Mammary epithelial cell (primary cell): ENCODE measurements at regions of chr6 and their contacts with region 1.

Region 1: DNA sequence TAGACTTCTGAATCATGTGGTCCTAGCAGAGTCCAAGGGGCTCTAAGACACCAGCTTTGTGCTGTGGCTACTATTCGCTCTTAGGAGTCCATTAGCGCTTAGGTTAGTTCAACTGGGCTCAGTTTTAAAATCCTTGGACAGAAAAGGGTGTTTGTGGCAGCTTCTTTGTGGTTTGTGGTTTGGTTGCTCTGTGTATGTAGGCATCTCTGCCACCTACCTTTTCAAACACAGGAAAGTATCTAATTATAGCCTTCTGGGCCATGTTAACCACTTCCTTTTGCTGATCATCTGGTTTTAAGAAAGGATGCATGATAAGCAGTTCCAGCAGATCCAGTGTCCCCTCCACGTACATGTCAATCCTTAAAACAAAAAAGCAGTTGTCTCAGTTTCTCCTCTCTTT is 10.8 kb downstream of the GSTA4 start:
- DNase-seq: peak; percentile 33
- H3K4me3 ChIP-seq: no peak overlapping the region
- H3K27ac ChIP-seq: no peak overlapping the region
- H3K4me1 ChIP-seq: peaks cover 8% of the 10 kb centered on the region
- H3K27me3 ChIP-seq: no peaks in the 10 kb centered on the region
- CTCF ChIP-seq: no peak

Region 2: DNA sequence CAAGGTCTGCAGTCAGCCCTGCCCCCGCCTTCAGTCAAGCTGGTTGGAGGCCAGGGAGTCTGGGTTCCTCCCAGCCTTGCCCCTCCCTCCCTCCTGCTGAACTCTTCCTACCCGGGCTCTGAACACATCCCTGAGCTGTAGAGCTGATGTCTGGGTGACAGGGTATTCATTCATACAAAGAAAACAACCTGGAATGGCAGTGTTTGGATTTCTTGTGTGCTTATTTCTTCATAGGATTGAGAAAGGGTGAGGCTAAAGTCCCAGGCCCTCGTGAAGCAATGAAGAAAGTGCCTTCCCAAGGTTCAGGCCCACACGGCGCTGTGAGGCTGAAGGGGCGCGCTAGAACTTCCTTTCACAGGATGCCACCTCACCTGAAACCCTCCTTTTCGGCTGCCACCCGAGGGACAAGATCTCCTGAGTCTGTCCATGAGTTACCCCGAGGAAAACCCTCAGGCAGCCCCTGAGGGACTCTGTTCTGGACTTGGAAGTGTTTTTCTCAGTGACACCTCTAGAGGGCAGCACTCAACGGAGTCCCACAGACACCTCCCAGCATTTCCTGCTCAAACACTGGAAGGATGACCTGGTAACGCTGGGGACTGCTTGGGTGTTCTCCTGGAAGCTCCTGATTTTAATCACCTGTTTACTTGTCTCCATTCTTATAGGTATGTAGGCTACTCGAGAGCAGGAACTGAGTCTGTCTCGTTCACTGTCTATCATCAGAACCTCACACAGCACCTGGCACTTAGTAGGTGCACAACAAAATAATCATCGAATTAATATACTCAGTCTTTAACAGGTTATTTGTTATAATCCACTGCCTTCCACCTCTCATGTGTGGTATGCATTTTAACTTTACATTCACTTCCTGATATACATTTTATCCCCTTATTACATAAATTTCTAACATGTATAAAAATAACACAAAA is 168.8 kb before region 1 on chr6:
- CTCF ChIA-PET with region 1: no interaction called
- dilution Hi-C with region 1: no loop called
- in situ Hi-C with region 1: no loop called
- intact Hi-C with region 1: loop called (anchors 5 kb)
- DNase-seq: peak; percentile 31
- H3K4me3 ChIP-seq: no peak overlapping the region
- H3K27ac ChIP-seq: no peak overlapping the region
- H3K4me1 ChIP-seq: no peaks in the 10 kb centered on the region
- H3K27me3 ChIP-seq: no peaks in the 10 kb centered on the region
- CTCF ChIP-seq: peak; percentile 43 to 63

Region 3: GRCh38 chr6:52904562-52905279 is 79.5 kb before region 1 on chr6:
- CTCF ChIA-PET with region 1: no interaction called
- dilution Hi-C with region 1: no loop called
- in situ Hi-C with region 1: no loop called
- intact Hi-C with region 1: no loop called
- DNase-seq: no peak
- H3K4me3 ChIP-seq: no peak overlapping the region
- H3K27ac ChIP-seq: no peak overlapping the region
- H3K4me1 ChIP-seq: no peaks in the 10 kb centered on the region
- H3K27me3 ChIP-seq: no peaks in the 10 kb centered on the region
- CTCF ChIP-seq: peak in 1 of 2 donors; percentile 35

Region 4: GRCh38 chr6:52946306-52946705 is 37.9 kb before region 1 on chr6:
- CTCF ChIA-PET with region 1: no interaction called
- dilution Hi-C with region 1: loop called (anchors 5 kb)
- in situ Hi-C with region 1: no loop called
- intact Hi-C with region 1: no loop called
- DNase-seq: no peak
- H3K4me3 ChIP-seq: no peak overlapping the region
- H3K27ac ChIP-seq: no peak overlapping the region
- H3K4me1 ChIP-seq: no peaks in the 10 kb centered on the region
- H3K27me3 ChIP-seq: no peaks in the 10 kb centered on the region
- CTCF ChIP-seq: no peak

Region 5: GRCh38 chr6:53492860-53493634 is 508.8 kb after region 1 on chr6:
- CTCF ChIA-PET with region 1: no interaction called
- dilution Hi-C with region 1: no loop called
- in situ Hi-C with region 1: no loop called
- intact Hi-C with region 1: no loop called
- DNase-seq: peak; percentile 65
- H3K4me3 ChIP-seq: peak overlapping the region; percentile 20 to 36 (median 21)
- H3K27ac ChIP-seq: peak overlapping the region; percentile 16
- H3K4me1 ChIP-seq: peaks cover 22% of the 10 kb centered on the region
- H3K27me3 ChIP-seq: no peaks in the 10 kb centered on the region
- CTCF ChIP-seq: peak; percentile 71 to 72